PC-9 (cell line): ENCODE measurements at regions of chr15 and their contacts with region 1.

Region 1: DNA sequence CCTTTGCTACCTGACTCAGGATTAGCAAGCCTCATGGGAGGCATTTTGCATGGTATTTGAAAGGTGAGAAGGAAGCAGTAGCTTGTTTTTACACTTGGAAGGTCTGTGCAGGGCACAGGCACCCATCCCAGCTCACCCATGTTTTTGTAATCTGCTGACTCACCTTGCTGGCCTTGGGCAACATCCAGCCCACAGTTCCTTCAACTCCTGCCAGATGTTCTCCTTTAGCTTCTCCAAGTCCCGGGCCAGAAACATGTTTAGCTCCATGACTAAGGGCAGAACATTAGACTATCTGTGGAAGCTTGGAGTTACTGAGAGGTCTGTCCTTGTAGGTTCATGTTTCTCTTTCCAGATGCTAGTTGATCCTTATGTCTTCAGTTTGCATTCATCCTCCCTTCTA is 12.4 kb upstream of the ZNF770 start:
- DNase-seq: peak; percentile 81 to 87
- H3K4me3 ChIP-seq: no peak overlapping the region
- H3K27ac ChIP-seq: peak overlapping the region; percentile 76
- H3K4me1 ChIP-seq: 0 out of 2 replicates have a peak, but pooled peaks cover 8% of the 10 kb centered on the region
- H3K27me3 ChIP-seq: no peaks in the 10 kb centered on the region
- CTCF ChIP-seq: no peak

Region 2: GRCh38 chr15:35019386-35020083 is 19.0 kb after region 1 on chr15:
- CTCF ChIA-PET with region 1: interaction called, 22 read pairs
- POLR2A ChIA-PET with region 1: interaction called, 18 read pairs
- intact Hi-C with region 1: no loop called
- DNase-seq: peak in 1 of 2 experiments; percentile 39
- H3K4me3 ChIP-seq: peak overlapping the region; percentile 29; the same call in 1 of the 2 replicates
- H3K27ac ChIP-seq: no peak overlapping the region
- H3K4me1 ChIP-seq: peaks cover 14% of the 10 kb centered on the region
- H3K27me3 ChIP-seq: no peaks in the 10 kb centered on the region
- CTCF ChIP-seq: no peak

Region 3: GRCh38 chr15:35028235-35028984 is 27.9 kb after region 1 on chr15:
- CTCF ChIA-PET with region 1: no interaction called
- POLR2A ChIA-PET with region 1: interaction called, 12 read pairs
- intact Hi-C with region 1: no loop called
- DNase-seq: no peak
- H3K4me3 ChIP-seq: no peak overlapping the region
- H3K27ac ChIP-seq: no peak overlapping the region
- H3K4me1 ChIP-seq: peaks cover 8% of the 10 kb centered on the region
- H3K27me3 ChIP-seq: no peaks in the 10 kb centered on the region
- CTCF ChIP-seq: no peak